Psoas muscle (tissue), 8 donors: ENCODE measurements at regions of chr19 and their contacts with region 1.

Region 1: DNA sequence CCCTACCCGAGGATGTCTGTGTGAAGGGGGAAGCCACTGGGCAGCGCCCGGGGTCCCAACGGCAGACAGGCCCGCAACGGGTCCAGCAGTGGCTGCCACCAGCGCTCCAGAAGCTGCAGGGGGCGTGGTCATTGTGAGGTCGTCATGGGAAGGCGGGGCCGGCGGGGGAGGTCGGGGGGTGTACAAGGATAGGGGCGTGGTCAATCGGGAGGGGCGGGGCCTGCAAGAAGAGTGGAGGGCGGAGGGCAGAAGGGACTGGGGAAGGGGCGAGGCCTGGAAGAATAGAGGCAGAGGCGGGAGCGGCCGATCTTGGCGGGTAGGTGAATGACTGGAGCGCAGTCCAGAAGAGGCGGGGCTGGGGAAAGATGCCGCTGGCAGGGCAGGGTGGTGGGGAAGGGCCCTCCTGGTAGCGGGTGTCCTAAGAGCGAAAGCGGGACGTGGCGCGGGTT is 4.4 kb downstream of the FUZ start:
- DNase-seq: peak; percentile 95 to 96
- ATAC-seq: peak; percentile 73 to 81 (median 77)
- H3K4me3 ChIP-seq: peak overlapping the region; percentile 90
- H3K27ac ChIP-seq: peak overlapping the region; percentile 88
- H3K4me1 ChIP-seq: peaks cover 11% of the 10 kb centered on the region
- H3K27me3 ChIP-seq: no peaks in the 10 kb centered on the region
- CTCF ChIP-seq: no peak

Region 2: DNA sequence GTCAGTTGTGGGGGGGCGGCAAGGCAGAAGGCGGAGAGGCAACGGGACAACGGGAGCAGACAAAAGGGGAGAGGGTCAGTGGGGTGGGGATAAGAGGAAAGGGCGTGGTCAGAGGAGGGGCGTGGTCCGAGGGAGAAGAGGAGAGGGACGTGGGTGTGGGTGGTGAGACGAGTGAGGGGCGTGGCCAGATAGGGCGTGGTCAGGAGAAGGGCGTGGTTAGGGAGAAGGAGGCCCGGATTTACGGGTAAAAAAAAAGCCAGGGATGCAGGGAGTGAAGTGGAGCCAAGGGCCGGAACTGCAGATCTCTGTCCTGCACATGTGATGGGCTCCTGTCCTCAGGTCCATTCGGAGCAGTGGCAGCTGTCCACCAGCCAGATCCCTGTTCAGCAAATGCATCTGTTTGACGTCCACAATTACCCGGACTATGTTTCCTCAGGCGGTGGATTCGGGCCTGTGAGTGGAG is 96.3 kb before region 1 on chr19:
- intact Hi-C with region 1: loop called in 1 of 2 experiments (anchors 10 kb)
- DNase-seq: peak in 1 of 2 donors; percentile 66
- ATAC-seq: peak in 2 of 4 donors; percentile 39 to 50
- H3K4me3 ChIP-seq: no peak overlapping the region
- H3K27ac ChIP-seq: no peak overlapping the region
- H3K4me1 ChIP-seq: no peaks in the 10 kb centered on the region
- H3K27me3 ChIP-seq: peaks cover 0 to 3% (median 0%) of the 10 kb centered on the region in 3 donors
- CTCF ChIP-seq: no peak